ENCODE measurements at regions of chr17 and their contacts with region 1.

Region 1: DNA sequence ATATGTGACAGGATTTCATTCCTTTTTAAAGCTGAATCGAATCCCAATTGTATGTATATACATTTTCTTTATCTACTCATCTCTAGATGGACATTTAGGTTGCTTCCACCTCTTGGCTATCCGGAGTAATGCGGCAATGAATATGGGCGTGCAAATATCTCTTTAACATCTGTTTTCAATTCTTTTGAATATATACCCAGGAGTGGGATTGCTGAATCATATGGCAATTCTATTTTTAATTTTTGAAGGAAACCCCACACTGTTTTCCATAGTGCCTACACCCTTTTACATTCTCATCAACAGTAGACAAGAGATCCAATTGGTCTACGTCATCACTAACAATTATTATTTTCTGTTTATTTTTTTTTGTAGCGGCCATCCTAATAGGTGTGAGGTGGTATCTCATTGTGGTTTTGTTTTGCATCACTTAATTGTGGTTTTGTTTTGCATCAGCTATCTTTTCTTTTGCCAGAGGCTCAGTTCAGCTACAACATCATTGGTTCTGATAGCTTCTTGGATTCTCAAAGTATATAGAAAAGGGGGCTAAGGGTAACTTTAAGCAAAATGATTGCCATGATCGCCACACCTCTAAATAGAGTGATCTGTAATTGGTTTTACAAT is 25.6 kb upstream of the MAP2K6 start:
- DNase-seq: no peak
- H3K4me3 ChIP-seq: no peak overlapping the region
- H3K4me3 Mint-ChIP-seq: no peak overlapping the region
- H3K27ac ChIP-seq: no peak overlapping the region
- H3K27ac Mint-ChIP-seq: no peak overlapping the region
- H3K4me1 ChIP-seq: no peaks in the 10 kb centered on the region
- H3K4me1 Mint-ChIP-seq: no peaks in the 10 kb centered on the region
- H3K27me3 ChIP-seq: no peaks in the 10 kb centered on the region
- H3K27me3 Mint-ChIP-seq: peaks cover 12 to 20% of the 10 kb centered on the region in 2 donors

Region 2: DNA sequence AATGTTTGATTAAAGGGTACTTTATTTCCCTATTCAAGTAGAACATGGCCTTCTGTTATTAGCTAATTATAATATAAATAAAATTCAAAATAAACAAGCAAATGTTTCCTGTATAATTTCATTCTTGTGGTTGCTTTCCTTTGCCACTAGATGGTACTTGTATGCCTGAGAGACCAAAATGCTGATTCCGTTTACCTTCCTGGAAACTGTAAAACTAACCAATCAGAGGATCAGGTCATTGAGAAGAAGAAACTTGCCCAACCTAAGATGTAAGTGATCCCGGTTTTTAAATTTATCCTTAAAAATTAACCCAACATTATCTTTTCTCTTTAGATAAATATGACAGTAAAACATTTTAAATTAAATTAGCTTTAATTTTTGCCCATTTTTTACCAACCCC is 53.9 kb before region 1 on chr17:
- CTCF ChIA-PET with region 1: interaction called, 22 read pairs
- POLR2A ChIA-PET with region 1: no interaction called
- intact Hi-C with region 1: no loop called
- DNase-seq: peak in 2 of 5 donors; percentile 7 to 22
- H3K4me3 ChIP-seq: no peak overlapping the region
- H3K4me3 Mint-ChIP-seq: no peak overlapping the region
- H3K27ac ChIP-seq: no peak overlapping the region
- H3K27ac Mint-ChIP-seq: no peak overlapping the region
- H3K4me1 ChIP-seq: no peaks in the 10 kb centered on the region
- H3K4me1 Mint-ChIP-seq: peaks cover 0 to 6% (median under 1%) of the 10 kb centered on the region in 4 donors
- H3K27me3 ChIP-seq: no peaks in the 10 kb centered on the region
- H3K27me3 Mint-ChIP-seq: peaks cover 1 to 3% of the 10 kb centered on the region in 2 donors

Region 3: DNA sequence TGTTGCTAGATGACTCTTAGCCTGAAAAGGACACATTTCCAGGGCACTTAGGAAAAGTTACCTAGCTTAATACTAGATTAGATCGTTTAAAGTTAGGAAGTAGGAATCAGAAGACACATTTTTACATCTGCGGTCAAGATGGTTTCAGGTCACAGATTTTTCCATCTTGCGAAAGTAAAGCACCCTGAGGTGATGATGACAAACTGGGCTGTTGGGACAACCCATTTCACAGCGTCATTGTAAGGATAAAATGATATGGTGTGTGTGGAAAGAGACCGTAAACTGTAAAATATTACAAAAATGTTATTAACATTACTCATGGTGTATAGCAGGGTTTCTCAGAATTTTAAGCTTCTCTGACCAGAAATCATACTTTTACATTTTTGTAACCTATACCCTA is 15.4 kb after region 1 on chr17:
- CTCF ChIA-PET with region 1: interaction called, 25 read pairs
- POLR2A ChIA-PET with region 1: no interaction called
- intact Hi-C with region 1: no loop called
- DNase-seq: no peak
- H3K4me3 ChIP-seq: no peak overlapping the region
- H3K4me3 Mint-ChIP-seq: no peak overlapping the region
- H3K27ac ChIP-seq: no peak overlapping the region
- H3K27ac Mint-ChIP-seq: no peak overlapping the region
- H3K4me1 ChIP-seq: no peaks in the 10 kb centered on the region
- H3K4me1 Mint-ChIP-seq: peaks cover 0 to 4% (median 0%) of the 10 kb centered on the region in 4 donors
- H3K27me3 ChIP-seq: no peaks in the 10 kb centered on the region
- H3K27me3 Mint-ChIP-seq: peaks cover 3 to 5% of the 10 kb centered on the region in 2 donors

Region 4: GRCh38 chr17:69414408-69415274 is 25.7 kb after region 1 on chr17 and contains the start of gene MAP2K6:
- CTCF ChIA-PET with region 1: interaction called, 29 read pairs
- POLR2A ChIA-PET with region 1: no interaction called
- intact Hi-C with region 1: no loop called
- DNase-seq: peak; percentile 76 to 87 (median 79)
- H3K4me3 ChIP-seq: peak within 1 kb of the TSS; percentile 13 to 90
- H3K4me3 Mint-ChIP-seq: peak within 1 kb of the TSS in 2 of 8 donors; percentile 4 to 21
- H3K27ac ChIP-seq: peak within 1 kb of the TSS; percentile 17
- H3K27ac Mint-ChIP-seq: peak within 1 kb of the TSS in 1 of 7 donors; percentile 40
- H3K4me1 ChIP-seq: peaks cover 42% of the 10 kb centered on the region
- H3K4me1 Mint-ChIP-seq: peaks cover 6 to 12% (median 7%) of the 10 kb centered on the region in 4 donors
- H3K27me3 ChIP-seq: no peaks in the 10 kb centered on the region
- H3K27me3 Mint-ChIP-seq: no peaks in the 10 kb centered on the region
- total RNA-seq, gene MAP2K6: 16.5 to 18.3 TPM

Region 5: GRCh38 chr17:69828087-69828486 is 439.2 kb after region 1 on chr17:
- CTCF ChIA-PET with region 1: no interaction called
- POLR2A ChIA-PET with region 1: no interaction called
- intact Hi-C with region 1: no loop called
- DNase-seq: no peak
- H3K4me3 ChIP-seq: no peak overlapping the region
- H3K4me3 Mint-ChIP-seq: no peak overlapping the region
- H3K27ac ChIP-seq: no peak overlapping the region
- H3K27ac Mint-ChIP-seq: no peak overlapping the region
- H3K4me1 ChIP-seq: no peaks in the 10 kb centered on the region
- H3K4me1 Mint-ChIP-seq: no peaks in the 10 kb centered on the region
- H3K27me3 ChIP-seq: no peaks in the 10 kb centered on the region
- H3K27me3 Mint-ChIP-seq: no peaks in the 10 kb centered on the region